GM12878 (cell line): ENCODE measurements at regions of chr13 and their contacts with region 1.

Region 1: DNA sequence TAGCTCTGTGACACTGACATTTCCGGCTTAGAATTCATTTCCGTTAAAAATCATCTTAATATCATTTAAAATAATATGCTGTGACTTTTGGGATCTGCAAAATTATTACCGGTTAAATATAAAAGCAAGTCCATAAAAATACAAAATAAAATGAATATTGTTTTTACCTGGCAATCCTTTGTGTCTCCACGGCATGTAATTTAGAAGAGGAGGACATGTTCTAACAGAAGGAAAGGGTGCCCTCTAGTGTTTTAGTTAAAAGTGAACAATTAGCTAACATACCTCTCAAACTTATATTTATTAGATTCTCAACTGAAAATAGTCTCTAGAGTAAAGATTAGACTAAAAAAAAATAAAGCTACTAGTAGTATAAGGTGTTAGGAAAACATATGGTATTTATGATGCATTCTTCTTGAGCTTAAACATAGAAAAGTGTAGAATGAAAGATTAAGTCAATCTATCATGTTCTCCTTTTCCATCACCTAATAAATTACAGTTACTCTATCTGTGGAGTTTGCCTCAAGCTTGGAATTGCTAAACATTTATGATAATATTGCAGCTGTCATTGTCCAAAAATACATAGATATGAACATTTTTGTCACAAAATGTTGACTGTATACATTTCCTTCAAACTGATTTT is 676.7 kb upstream of the SPRY2 start:
- DNase-seq: no peak
- ATAC-seq: peak; percentile 88
- H3K4me3 ChIP-seq: no peak overlapping the region
- H3K27ac ChIP-seq: no peak overlapping the region
- H3K4me1 ChIP-seq: no peaks in the 10 kb centered on the region
- H3K27me3 ChIP-seq: no peaks in the 10 kb centered on the region
- CTCF ChIP-seq: peak; percentile 38 to 54 (median 39); a peak in 3 of 6 replicates
- EP300 ChIP-seq: no peak
- POLR2A ChIP-seq: no peak
- RAD21 ChIP-seq: peak; percentile 72

Region 2: DNA sequence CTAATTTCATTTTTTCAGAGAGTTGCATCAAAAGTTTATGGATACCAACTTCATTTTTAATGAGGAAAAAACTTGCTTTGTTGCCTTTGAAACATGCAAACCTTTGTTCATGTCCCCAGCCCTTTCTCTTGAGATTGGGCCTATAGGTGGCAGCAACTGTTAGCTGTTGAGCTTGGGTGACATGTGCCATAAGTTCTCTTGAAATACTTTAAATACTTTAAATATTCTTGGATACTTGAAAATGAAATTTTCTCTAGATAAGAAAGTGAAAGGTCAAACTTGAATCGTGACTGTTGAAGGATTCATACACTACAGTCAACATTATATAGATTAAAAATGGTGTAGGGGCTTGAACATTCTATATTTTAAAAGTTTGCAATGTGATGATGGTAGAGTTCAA is 1241.8 kb before region 1 on chr13:
- CTCF ChIA-PET with region 1: interaction called, 8 read pairs
- POLR2A ChIA-PET with region 1: no interaction called
- RAD21 ChIA-PET with region 1: interaction called, 22 read pairs
- SMC1A ChIA-PET with region 1: interaction called, 10 read pairs
- in situ Hi-C with region 1: no loop called
- intact Hi-C with region 1: loop called (anchors 10 kb)
- DNase-seq: no peak
- ATAC-seq: peak; percentile 86
- H3K4me3 ChIP-seq: no peak overlapping the region
- H3K27ac ChIP-seq: no peak overlapping the region
- H3K4me1 ChIP-seq: no peaks in the 10 kb centered on the region
- H3K27me3 ChIP-seq: no peaks in the 10 kb centered on the region
- CTCF ChIP-seq: peak; percentile 60 to 78 (median 65)
- EP300 ChIP-seq: no peak
- POLR2A ChIP-seq: no peak
- RAD21 ChIP-seq: peak; percentile 94

Region 3: GRCh38 chr13:80979035-80979641 is 38.5 kb before region 1 on chr13:
- CTCF ChIA-PET with region 1: interaction called, 43 read pairs
- POLR2A ChIA-PET with region 1: no interaction called
- RAD21 ChIA-PET with region 1: interaction called, 15 read pairs
- SMC1A ChIA-PET with region 1: interaction called, 10 read pairs
- in situ Hi-C with region 1: no loop called
- intact Hi-C with region 1: loop called (anchors 1 kb)
- DNase-seq: peak; percentile 11
- ATAC-seq: peak; percentile 85
- H3K4me3 ChIP-seq: no peak overlapping the region
- H3K27ac ChIP-seq: no peak overlapping the region
- H3K4me1 ChIP-seq: no peaks in the 10 kb centered on the region
- H3K27me3 ChIP-seq: no peaks in the 10 kb centered on the region
- CTCF ChIP-seq: peak; percentile 80 to 85 (median 83)
- EP300 ChIP-seq: no peak
- POLR2A ChIP-seq: no peak
- RAD21 ChIP-seq: peak; percentile 68

Region 4: GRCh38 chr13:80988391-80989151 is 29.1 kb before region 1 on chr13:
- CTCF ChIA-PET with region 1: interaction called, 15 read pairs
- POLR2A ChIA-PET with region 1: no interaction called
- RAD21 ChIA-PET with region 1: no interaction called
- SMC1A ChIA-PET with region 1: interaction called, 3 read pairs
- in situ Hi-C with region 1: no loop called
- intact Hi-C with region 1: no loop called
- DNase-seq: no peak
- ATAC-seq: no peak
- H3K4me3 ChIP-seq: no peak overlapping the region
- H3K27ac ChIP-seq: no peak overlapping the region
- H3K4me1 ChIP-seq: no peaks in the 10 kb centered on the region
- H3K27me3 ChIP-seq: no peaks in the 10 kb centered on the region
- CTCF ChIP-seq: no peak
- EP300 ChIP-seq: no peak
- POLR2A ChIP-seq: no peak
- RAD21 ChIP-seq: no peak